BJ (cell line): ENCODE measurements at regions of chr2 and their contacts with region 1.

Region 1: GRCh38 chr2:24521975-24522639 is 31.1 kb downstream of the NCOA1 start:
- DNase-seq: no peak
- H3K4me3 ChIP-seq: no peak overlapping the region
- H3K27me3 ChIP-seq: no peaks in the 10 kb centered on the region
- CTCF ChIP-seq: no peak

Region 2: DNA sequence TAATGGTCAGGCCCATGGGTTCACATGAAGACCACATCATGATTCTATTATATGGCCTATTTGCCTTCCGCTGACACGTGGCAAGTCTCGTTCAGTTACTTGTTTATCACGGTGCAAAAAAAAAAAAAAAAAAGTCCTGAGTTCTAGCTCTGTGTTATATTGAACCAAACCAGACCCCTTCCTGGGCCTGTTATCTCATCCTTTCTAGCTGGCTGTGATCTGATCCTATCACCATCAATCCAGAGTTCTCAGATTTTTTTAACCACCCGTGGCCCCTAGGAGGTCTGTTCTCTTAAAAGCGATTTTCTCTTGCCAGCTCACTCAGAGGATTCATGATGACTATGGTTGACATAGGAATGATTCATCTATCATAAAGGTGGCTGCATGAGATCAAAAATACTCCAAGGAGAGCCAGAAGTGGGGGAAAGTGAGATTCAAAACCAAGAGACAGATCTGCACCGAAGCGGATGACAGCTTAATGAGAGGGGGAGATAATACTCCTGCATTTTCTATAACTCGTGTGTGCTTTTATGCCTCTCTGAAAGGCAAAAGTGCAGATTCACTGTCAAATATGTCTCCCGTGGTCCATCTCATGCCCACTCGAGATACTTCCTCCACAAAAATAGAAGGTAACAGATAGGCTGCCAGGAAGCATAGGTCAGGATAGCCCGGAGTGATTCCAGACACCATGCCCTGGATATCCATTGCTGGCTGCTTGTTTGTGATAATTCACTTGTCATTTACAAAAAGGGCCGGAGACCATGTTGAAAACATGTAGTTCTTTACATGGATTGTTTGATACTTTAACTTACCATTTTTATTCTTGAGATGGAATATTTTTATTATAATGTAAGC is 1642.9 kb before region 1 on chr2:
- CTCF ChIA-PET with region 1: no interaction called
- POLR2A ChIA-PET with region 1: no interaction called
- DNase-seq: no peak
- H3K4me3 ChIP-seq: no peak overlapping the region
- H3K27me3 ChIP-seq: no peaks in the 10 kb centered on the region
- CTCF ChIP-seq: no peak

Region 3: DNA sequence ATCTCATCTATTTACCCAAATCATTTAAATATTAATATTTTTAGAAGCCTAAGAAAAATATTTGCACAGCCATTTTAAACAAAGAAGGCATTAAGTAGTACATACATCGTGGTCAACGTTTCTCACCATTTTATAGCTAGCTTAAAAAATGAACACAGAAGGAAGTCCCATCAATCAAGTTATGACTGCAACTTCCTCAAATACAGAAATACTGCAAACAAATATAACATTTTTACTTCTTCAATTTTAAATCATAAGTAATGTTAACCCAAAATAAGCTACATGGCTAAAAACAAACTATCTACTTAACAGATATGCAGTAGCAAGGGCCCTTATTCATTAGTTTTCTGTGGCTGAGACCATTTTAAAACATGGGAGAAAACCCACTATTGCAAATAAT is 192.4 kb before region 1 on chr2:
- CTCF ChIA-PET with region 1: no interaction called
- POLR2A ChIA-PET with region 1: interaction called, 17 read pairs
- DNase-seq: no peak
- H3K4me3 ChIP-seq: no peak overlapping the region
- H3K27me3 ChIP-seq: no peaks in the 10 kb centered on the region
- CTCF ChIP-seq: no peak

Region 4: GRCh38 chr2:24505534-24506275 is 16.4 kb before region 1 on chr2:
- CTCF ChIA-PET with region 1: no interaction called
- POLR2A ChIA-PET with region 1: no interaction called
- DNase-seq: no peak
- H3K4me3 ChIP-seq: no peak overlapping the region
- H3K27me3 ChIP-seq: no peaks in the 10 kb centered on the region
- CTCF ChIP-seq: no peak